Activated CD4-positive, alpha-beta T cell treated with anti-CD3 and anti-CD28 coated beads for 36 hours (primary cell): ENCODE measurements at regions of chr17 and their contacts with region 1.

Region 1: GRCh38 chr17:46822388-46822921 is 4.0 kb upstream of the WNT3 start:
- DNase-seq: peak; percentile 72
- ATAC-seq: peak; percentile 10
- H3K4me3 Mint-ChIP-seq: no peak overlapping the region
- H3K27ac Mint-ChIP-seq: no peak overlapping the region
- H3K4me1 Mint-ChIP-seq: peaks cover 20% of the 10 kb centered on the region
- H3K27me3 Mint-ChIP-seq: peaks cover 44% of the 10 kb centered on the region

Region 2: GRCh38 chr17:46072998-46073397 is 749.5 kb before region 1 on chr17:
- CTCF ChIA-PET with region 1: no interaction called
- POLR2A ChIA-PET with region 1: no interaction called
- intact Hi-C with region 1: no loop called
- DNase-seq: no peak
- ATAC-seq: no peak
- H3K4me3 Mint-ChIP-seq: no peak overlapping the region
- H3K27ac Mint-ChIP-seq: no peak overlapping the region
- H3K4me1 Mint-ChIP-seq: peaks cover 35% of the 10 kb centered on the region
- H3K27me3 Mint-ChIP-seq: no peaks in the 10 kb centered on the region

Region 3: DNA sequence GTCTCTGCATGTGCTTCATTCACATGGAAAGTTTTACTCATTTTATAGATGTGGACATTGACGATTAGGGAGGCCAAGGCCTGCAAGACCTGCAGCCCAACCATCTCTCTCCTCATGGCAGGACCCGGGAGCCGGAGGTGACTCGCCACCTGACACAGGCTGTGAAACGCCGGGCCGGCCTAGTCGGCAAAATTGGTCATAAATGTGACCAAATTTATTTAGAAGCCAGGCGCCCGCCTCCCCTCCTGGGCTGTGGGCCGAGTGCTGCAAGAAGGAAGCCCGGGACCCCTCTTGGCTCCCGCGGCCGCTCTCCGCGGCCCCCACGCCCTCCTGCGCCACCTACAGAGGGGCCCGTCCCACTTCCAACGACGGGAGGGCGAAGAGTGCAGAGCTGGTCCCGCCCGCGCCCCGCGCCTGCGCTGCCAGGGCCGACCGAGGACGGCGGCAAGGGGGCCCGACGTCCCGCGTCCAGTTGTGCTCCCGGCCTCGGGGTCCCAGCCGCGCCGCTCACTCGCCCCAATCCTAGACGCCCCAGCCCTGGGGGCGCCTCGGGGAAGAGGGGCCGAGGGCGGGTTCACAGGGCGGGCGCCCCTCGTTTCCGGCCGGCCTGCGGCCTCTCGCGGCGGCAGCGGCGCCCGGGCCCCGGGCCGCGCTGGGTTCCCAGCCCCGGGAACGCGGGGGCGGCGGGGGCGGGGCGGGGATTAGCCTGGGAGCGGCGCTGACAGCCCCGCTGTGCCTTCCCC is 51.5 kb before region 1 on chr17:
- CTCF ChIA-PET with region 1: no interaction called
- POLR2A ChIA-PET with region 1: no interaction called
- intact Hi-C with region 1: loop called in 1 of 2 experiments (anchors 5 kb)
- DNase-seq: peak; percentile 59
- ATAC-seq: peak; percentile 62
- H3K4me3 Mint-ChIP-seq: peak overlapping the region; percentile 38
- H3K27ac Mint-ChIP-seq: no peak overlapping the region
- H3K4me1 Mint-ChIP-seq: peaks cover 5% of the 10 kb centered on the region
- H3K27me3 Mint-ChIP-seq: peaks cover 20% of the 10 kb centered on the region

Region 4: DNA sequence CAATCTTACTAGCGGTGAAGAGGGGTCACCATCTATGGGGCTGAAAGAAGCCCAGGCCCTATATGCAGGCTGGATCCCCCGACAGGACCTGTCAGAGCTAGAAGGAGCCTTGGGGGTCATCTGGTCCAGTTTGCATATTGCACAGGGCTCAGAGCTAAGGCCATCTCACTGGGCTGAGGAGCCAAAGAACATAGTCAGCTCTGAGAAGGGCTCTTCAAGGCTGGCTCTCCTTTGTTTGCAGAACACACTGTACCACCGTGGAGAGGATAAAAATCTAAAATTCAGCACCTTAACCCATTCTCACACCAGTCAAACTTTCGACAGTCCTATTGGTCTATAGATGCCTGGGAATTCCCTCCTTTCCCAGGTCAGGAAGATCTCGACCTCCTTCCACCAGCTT is 28.1 kb before region 1 on chr17:
- CTCF ChIA-PET with region 1: no interaction called
- POLR2A ChIA-PET with region 1: no interaction called
- intact Hi-C with region 1: loop called in 1 of 2 experiments (anchors 5 kb)
- DNase-seq: no peak
- ATAC-seq: no peak
- H3K4me3 Mint-ChIP-seq: no peak overlapping the region
- H3K27ac Mint-ChIP-seq: no peak overlapping the region
- H3K4me1 Mint-ChIP-seq: no peaks in the 10 kb centered on the region
- H3K27me3 Mint-ChIP-seq: peaks cover 10% of the 10 kb centered on the region

Region 5: DNA sequence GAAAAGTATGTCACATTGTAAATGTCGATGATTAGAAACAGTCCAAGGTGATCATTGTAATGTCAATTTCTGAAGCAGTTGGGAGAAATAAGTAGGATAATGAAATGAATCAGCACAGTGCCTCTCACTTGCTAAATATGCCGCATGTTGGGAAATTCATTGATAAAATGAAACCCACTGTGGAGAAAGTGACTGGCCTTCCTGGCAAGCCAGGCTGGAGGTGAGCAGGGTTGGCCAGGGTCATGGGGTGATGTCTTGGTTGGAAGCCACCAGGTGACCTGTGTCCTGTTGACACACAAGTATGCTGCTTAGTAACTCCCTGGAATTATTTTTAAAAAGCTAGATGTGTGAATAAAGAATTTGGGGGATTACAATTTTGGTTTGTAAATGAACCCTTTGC is 14.0 kb after region 1 on chr17:
- CTCF ChIA-PET with region 1: interaction called, 13 read pairs
- POLR2A ChIA-PET with region 1: no interaction called
- intact Hi-C with region 1: no loop called
- DNase-seq: no peak
- ATAC-seq: no peak
- H3K4me3 Mint-ChIP-seq: no peak overlapping the region
- H3K27ac Mint-ChIP-seq: no peak overlapping the region
- H3K4me1 Mint-ChIP-seq: peaks cover 6% of the 10 kb centered on the region
- H3K27me3 Mint-ChIP-seq: peaks cover 17% of the 10 kb centered on the region

Region 6: GRCh38 chr17:46894476-46895151 is 72.2 kb after region 1 on chr17:
- CTCF ChIA-PET with region 1: no interaction called
- POLR2A ChIA-PET with region 1: no interaction called
- intact Hi-C with region 1: no loop called
- DNase-seq: no peak
- ATAC-seq: no peak
- H3K4me3 Mint-ChIP-seq: no peak overlapping the region
- H3K27ac Mint-ChIP-seq: no peak overlapping the region
- H3K4me1 Mint-ChIP-seq: no peaks in the 10 kb centered on the region
- H3K27me3 Mint-ChIP-seq: peaks cover 6% of the 10 kb centered on the region

Region 7: DNA sequence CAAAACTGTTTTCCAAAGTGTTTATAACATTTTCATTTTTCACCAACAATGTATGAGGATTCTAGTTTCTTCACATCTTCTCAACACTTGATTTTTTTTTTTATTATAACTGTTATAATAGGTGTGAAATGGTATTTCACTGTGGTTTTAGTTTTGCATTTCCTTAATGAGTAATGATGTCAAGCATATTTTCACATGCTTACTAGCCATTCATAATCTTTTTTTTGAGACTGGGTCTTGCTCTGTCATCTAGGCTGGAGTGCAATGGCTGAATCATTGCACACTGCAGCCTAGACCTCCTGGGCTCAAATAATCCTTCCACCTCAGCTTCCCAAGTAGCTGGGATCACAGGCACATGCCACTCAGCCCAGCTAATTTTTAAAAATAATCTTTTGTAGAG is 566.4 kb after region 1 on chr17:
- CTCF ChIA-PET with region 1: no interaction called
- POLR2A ChIA-PET with region 1: no interaction called
- intact Hi-C with region 1: no loop called
- DNase-seq: no peak
- ATAC-seq: no peak
- H3K4me3 Mint-ChIP-seq: no peak overlapping the region
- H3K27ac Mint-ChIP-seq: no peak overlapping the region
- H3K4me1 Mint-ChIP-seq: no peaks in the 10 kb centered on the region
- H3K27me3 Mint-ChIP-seq: no peaks in the 10 kb centered on the region